AG04450 (cell line): ENCODE measurements at regions of chr6 and their contacts with region 1.

Region 1: GRCh38 chr6:150891888-150892485 is 26.5 kb downstream of the MTHFD1L start:
- DNase-seq: peak; percentile 72
- H3K4me3 ChIP-seq: no peak overlapping the region
- H3K27ac ChIP-seq: no peak overlapping the region
- H3K27me3 ChIP-seq: no peaks in the 10 kb centered on the region
- CTCF ChIP-seq: peak; percentile 89

Region 2: DNA sequence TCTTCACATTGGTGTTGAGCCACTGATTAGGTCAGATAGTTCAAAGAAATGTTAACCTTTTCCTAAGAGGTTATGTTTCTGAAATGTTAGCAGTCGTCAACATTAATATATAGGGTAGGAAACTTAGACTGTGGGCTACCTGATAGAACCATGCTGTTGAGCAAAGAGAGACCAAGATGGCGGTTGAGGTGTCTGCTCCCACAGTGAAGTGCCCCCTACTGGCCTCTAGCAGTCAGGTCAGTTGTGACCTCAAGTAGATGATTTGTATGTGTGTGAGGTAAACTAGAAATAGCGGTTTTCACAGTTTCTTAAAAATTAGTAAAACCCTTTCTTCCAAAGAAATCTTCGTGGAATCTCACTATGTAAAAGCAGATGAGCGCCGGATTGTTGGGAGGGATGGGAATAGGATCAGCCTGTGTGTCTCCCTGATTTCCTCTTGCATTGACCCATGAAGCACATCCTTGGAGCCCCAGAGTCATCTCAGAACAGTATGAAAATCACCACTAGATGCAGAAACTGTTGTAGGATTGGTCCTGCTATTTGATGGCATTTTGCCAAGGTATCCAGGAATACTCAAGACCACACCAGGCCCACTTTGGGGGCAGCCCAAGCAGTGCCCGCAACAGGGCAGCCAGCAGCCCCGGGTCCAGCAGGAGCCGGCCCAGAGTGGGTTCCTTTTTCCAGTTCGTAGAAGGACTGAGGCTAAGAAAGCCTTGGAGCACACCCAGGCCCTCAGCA is 14.0 kb after region 1 on chr6:
- CTCF ChIA-PET with region 1: interaction called, 32 read pairs
- POLR2A ChIA-PET with region 1: interaction called, 3 read pairs
- DNase-seq: no peak
- H3K4me3 ChIP-seq: no peak overlapping the region
- H3K27ac ChIP-seq: no peak overlapping the region
- H3K27me3 ChIP-seq: no peaks in the 10 kb centered on the region
- CTCF ChIP-seq: peak; percentile 29; the same call in 1 of the 2 replicates

Region 3: GRCh38 chr6:150962436-150962835 is 70.4 kb after region 1 on chr6:
- CTCF ChIA-PET with region 1: interaction called, 10 read pairs
- POLR2A ChIA-PET with region 1: no interaction called
- DNase-seq: no peak
- H3K4me3 ChIP-seq: no peak overlapping the region
- H3K27ac ChIP-seq: no peak overlapping the region
- H3K27me3 ChIP-seq: no peaks in the 10 kb centered on the region
- CTCF ChIP-seq: no peak

Region 4: DNA sequence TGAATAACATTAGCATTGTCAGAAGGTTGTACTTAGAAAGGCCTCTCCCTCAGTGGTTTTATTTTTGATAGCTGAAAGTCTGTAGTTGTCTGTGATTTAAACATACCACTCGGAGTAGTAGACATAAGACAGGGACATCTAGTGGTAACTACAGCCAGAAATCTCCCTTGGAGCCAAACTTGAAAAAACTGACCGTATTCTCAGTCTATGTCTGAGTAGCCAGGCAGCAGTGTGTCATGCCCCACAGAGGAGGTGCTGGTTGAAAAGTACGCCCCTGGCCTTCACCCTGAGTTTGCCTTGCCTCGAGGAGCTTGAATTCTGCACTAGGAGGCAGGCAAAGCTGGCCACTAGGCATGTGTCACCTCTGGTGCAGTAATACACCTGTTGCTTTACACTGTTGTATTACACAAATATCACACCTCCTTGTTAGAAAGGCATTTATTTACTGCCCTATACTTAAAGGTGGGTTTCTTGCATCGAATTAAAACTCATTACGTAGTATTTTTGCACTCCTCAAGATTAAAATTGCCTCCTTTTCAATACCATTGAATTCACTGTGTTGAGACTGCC is 478.6 kb after region 1 on chr6:
- CTCF ChIA-PET with region 1: interaction called, 16 read pairs
- POLR2A ChIA-PET with region 1: no interaction called
- DNase-seq: no peak
- H3K4me3 ChIP-seq: no peak overlapping the region
- H3K27ac ChIP-seq: no peak overlapping the region
- H3K27me3 ChIP-seq: no peaks in the 10 kb centered on the region
- CTCF ChIP-seq: peak; percentile 35

Region 5: DNA sequence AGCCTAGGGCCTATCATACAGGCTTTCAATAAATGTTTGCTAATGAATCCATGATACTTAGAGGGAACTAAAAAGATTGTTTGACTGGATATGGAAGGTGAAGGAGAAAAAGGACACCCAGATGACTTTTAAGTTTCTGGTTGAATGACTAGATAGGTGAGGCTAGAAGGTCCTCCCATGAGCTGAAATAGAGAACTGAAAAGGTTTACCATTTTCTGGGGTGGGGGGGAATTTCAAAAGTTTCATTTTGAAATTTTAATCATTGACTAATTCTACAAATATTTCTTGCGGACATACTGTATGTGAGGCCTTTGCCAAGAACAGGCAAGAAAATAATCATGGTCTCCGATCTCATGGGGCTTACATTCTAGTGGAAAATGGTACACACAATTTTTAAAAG is 517.3 kb after region 1 on chr6:
- CTCF ChIA-PET with region 1: interaction called, 10 read pairs
- POLR2A ChIA-PET with region 1: no interaction called
- DNase-seq: no peak
- H3K4me3 ChIP-seq: no peak overlapping the region
- H3K27ac ChIP-seq: no peak overlapping the region
- H3K27me3 ChIP-seq: no peaks in the 10 kb centered on the region
- CTCF ChIP-seq: no peak